ENCODE measurements at regions of chr2 and their contacts with region 1.

Region 1: GRCh38 chr2:5365871-5366461 is 326.2 kb upstream of the SOX11 start:
- DNase-seq: peak; percentile 72
- ATAC-seq: peak; percentile 77
- H3K4me3 Mint-ChIP-seq: no peak overlapping the region
- H3K27ac Mint-ChIP-seq: no peak overlapping the region
- H3K4me1 Mint-ChIP-seq: no peaks in the 10 kb centered on the region
- H3K27me3 Mint-ChIP-seq: no peaks in the 10 kb centered on the region
- CTCF ChIP-seq: peak; percentile 73

Region 2: DNA sequence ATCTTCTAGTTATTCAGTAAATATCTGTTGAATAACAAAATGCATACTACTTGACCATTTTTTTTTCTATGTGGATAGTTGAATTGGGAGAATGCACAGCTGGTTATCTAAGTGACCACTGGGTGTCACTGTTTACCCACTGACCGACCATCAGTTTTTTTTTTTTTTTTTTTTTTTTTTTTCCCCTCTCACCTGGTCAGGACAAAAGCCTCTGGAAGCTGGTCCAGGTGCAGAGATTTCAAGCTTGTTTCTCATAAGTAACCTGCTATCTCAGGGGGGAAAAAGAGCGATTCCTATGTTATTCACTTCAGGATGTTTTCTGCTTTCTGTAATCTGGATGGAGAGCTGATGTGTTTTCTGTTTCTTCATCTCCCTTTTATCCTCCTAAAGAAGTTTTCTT is 1406.6 kb before region 1 on chr2:
- CTCF ChIA-PET with region 1: interaction called, 5 read pairs
- POLR2A ChIA-PET with region 1: no interaction called
- intact Hi-C with region 1: loop called (anchors 5 kb)
- DNase-seq: peak; percentile 7
- ATAC-seq: no peak
- H3K4me3 Mint-ChIP-seq: no peak overlapping the region
- H3K27ac Mint-ChIP-seq: no peak overlapping the region
- H3K4me1 Mint-ChIP-seq: no peaks in the 10 kb centered on the region
- H3K27me3 Mint-ChIP-seq: no peaks in the 10 kb centered on the region
- CTCF ChIP-seq: peak; percentile 71

Measured in activated CD8-positive, alpha-beta T cell treated with anti-CD3 and anti-CD28 coated beads for 36 hours (primary cell).